Activated CD4-positive, alpha-beta T cell treated with anti-CD3 and anti-CD28 coated beads for 36 hours (primary cell): ENCODE measurements at regions of chr14 and their contacts with region 1.

Region 1: GRCh38 chr14:22556990-22557623 is 31.9 kb downstream of the DAD1 start:
- DNase-seq: peak; percentile 96
- ATAC-seq: peak; percentile 10
- H3K4me3 Mint-ChIP-seq: peak overlapping the region; percentile 76
- H3K27ac Mint-ChIP-seq: peak overlapping the region; percentile 100
- H3K4me1 Mint-ChIP-seq: peaks cover 86% of the 10 kb centered on the region
- H3K27me3 Mint-ChIP-seq: no peaks in the 10 kb centered on the region

Region 2: GRCh38 chr14:21748869-21749303 is 808.2 kb before region 1 on chr14:
- CTCF ChIA-PET with region 1: interaction called, 6 read pairs
- POLR2A ChIA-PET with region 1: no interaction called
- intact Hi-C with region 1: loop called in 1 of 2 experiments (anchors 2 kb)
- DNase-seq: peak; percentile 75
- ATAC-seq: peak; percentile 91
- H3K4me3 Mint-ChIP-seq: peak overlapping the region; percentile 52
- H3K27ac Mint-ChIP-seq: peak overlapping the region; percentile 71
- H3K4me1 Mint-ChIP-seq: peaks cover 9% of the 10 kb centered on the region
- H3K27me3 Mint-ChIP-seq: no peaks in the 10 kb centered on the region

Region 3: GRCh38 chr14:21987937-21988336 is 569.2 kb before region 1 on chr14:
- CTCF ChIA-PET with region 1: interaction called, 5 read pairs
- POLR2A ChIA-PET with region 1: interaction called, 4 read pairs
- intact Hi-C with region 1: loop called (anchors 1 to 10 kb)
- DNase-seq: peak; percentile 25
- ATAC-seq: peak; percentile 72
- H3K4me3 Mint-ChIP-seq: peak overlapping the region; percentile 57
- H3K27ac Mint-ChIP-seq: peak overlapping the region; percentile 86
- H3K4me1 Mint-ChIP-seq: peaks cover 28% of the 10 kb centered on the region
- H3K27me3 Mint-ChIP-seq: peaks cover 2% of the 10 kb centered on the region

Region 4: GRCh38 chr14:22314181-22314820 is 242.8 kb before region 1 on chr14:
- CTCF ChIA-PET with region 1: no interaction called
- POLR2A ChIA-PET with region 1: no interaction called
- intact Hi-C with region 1: loop called (anchors 5 to 10 kb)
- DNase-seq: no peak
- ATAC-seq: peak; percentile 61
- H3K4me3 Mint-ChIP-seq: peak overlapping the region; percentile 45
- H3K27ac Mint-ChIP-seq: peak overlapping the region; percentile 75
- H3K4me1 Mint-ChIP-seq: no peaks in the 10 kb centered on the region
- H3K27me3 Mint-ChIP-seq: no peaks in the 10 kb centered on the region

Region 5: DNA sequence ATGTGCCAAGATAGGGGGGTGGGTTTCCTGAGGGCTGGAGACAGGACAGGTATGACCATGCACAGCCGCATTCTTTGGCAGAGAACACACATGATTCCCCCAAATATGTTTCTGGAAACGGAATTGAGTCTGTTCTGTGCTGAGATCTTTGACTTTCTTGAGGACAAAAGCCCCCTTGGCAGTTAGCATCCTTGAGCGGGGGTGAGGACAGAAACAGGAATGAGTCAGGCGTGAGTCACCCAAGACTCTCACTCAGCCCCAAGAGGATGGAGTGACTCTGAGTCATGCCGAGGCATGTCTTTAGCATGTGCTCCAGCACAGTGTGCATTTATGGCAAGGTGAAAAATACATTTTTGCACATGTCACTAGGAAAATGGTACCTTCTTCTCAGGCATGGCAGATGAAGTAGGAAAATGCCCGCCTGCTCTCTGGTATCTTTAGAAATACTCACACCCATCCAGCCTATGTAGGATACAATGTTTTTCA is 20.2 kb before region 1 on chr14:
- CTCF ChIA-PET with region 1: interaction called, 39 read pairs
- POLR2A ChIA-PET with region 1: interaction called, 29 read pairs
- intact Hi-C with region 1: loop called in 1 of 2 experiments (anchors 1 kb)
- DNase-seq: peak; percentile 94
- ATAC-seq: peak; percentile 84
- H3K4me3 Mint-ChIP-seq: peak overlapping the region; percentile 84
- H3K27ac Mint-ChIP-seq: peak overlapping the region; percentile 99
- H3K4me1 Mint-ChIP-seq: peaks cover 95% of the 10 kb centered on the region
- H3K27me3 Mint-ChIP-seq: no peaks in the 10 kb centered on the region

Region 6: GRCh38 chr14:22622255-22622654 is 65.1 kb after region 1 on chr14:
- CTCF ChIA-PET with region 1: no interaction called
- POLR2A ChIA-PET with region 1: no interaction called
- intact Hi-C with region 1: no loop called
- DNase-seq: no peak
- ATAC-seq: no peak
- H3K4me3 Mint-ChIP-seq: no peak overlapping the region
- H3K27ac Mint-ChIP-seq: no peak overlapping the region
- H3K4me1 Mint-ChIP-seq: no peaks in the 10 kb centered on the region
- H3K27me3 Mint-ChIP-seq: peaks cover 2% of the 10 kb centered on the region

Region 7: DNA sequence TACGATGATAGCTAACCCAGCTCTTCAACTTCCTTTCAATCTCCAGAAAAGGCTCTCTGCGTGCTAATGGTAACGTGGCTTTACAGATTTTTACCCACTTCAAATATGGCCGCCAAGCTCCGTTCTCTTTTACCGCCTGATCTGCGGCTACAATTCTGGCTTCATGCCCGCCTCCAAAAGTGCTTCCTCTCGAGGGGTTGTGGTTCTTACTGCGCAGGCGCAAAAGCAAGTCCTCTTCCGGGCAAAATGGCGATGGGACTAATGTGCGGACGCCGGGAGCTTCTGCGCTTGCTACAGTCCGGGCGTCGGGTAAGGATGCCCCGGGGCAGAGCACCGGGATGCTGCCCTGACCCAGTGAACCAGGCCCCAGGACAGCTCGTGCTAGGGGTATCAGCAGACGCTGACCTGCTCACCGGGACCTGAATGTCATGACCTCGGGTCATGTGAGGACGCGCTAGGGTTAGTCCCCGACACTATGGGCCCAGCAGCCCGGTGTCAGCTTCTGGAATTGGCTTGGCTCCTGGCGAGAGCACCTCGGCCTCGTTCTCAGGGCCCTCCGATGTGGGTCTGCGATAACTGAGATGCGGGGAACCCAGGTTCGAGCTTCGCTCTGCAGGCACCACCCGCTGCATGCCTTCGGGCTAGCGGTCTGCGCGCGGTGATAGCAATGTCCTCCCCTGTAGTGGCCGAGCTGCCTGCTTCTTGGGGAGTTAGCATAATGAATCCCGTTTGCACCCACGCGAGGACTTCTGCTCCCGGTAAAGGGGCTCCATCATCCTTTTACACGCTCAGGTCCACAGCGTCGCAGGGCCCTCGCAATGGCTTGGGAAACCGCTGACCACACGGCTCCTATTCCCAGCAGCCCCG is 209.6 kb after region 1 on chr14 and contains the start of gene OXA1L:
- CTCF ChIA-PET with region 1: interaction called, 7 read pairs
- POLR2A ChIA-PET with region 1: interaction called, 11 read pairs
- intact Hi-C with region 1: loop called in 1 of 2 experiments (anchors 1 kb)
- DNase-seq: peak; percentile 98
- ATAC-seq: peak; percentile 87
- H3K4me3 Mint-ChIP-seq: peak within 1 kb of the TSS; percentile 90
- H3K27ac Mint-ChIP-seq: peak within 1 kb of the TSS; percentile 99
- H3K4me1 Mint-ChIP-seq: peaks cover 32% of the 10 kb centered on the region
- H3K27me3 Mint-ChIP-seq: no peaks in the 10 kb centered on the region
- total RNA-seq, gene OXA1L: 136 to 148 TPM

Region 8: DNA sequence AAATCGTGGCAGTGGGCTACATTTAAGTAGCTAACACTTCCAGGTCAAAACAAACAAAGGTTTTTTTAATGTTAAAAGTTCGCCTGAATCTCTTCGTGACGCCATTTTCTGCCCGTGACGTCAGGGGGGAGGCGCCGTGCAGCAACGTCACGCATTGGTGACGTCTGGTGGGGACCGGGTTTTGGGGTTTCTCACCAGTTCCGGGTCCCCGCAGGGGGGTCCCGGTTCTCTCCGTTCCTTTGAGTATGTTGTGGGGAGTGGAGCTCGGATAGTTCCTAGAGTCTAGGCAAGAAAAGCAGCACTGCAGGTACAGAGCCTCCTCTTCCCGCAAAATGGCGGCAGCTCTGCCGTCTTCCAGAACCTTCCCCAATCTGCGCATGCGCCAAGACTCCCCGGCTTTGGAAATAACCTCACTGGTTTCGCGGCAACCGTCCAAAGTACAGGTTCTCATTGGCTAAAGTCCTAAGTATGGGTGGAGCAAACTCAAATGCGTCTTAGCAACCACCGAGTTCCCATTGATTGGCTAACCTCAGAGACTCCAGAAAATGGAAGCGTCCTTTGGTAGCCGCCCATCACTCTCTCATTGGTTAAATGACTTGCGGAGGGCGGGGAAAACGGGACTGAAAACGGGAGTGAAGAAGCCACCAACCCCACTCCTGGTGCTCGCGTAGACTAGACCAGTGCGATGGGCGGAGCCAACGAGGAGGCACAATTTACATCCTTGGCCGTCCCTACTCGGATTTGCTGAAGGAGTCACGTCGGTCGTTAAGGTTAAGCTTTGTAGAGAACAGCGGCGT is 361.9 kb after region 1 on chr14 and contains the start of gene RBM23:
- CTCF ChIA-PET with region 1: no interaction called
- POLR2A ChIA-PET with region 1: no interaction called
- intact Hi-C with region 1: loop called in 1 of 2 experiments (anchors 1 kb)
- DNase-seq: peak; percentile 100
- ATAC-seq: peak; percentile 97
- H3K4me3 Mint-ChIP-seq: peak within 1 kb of the TSS; percentile 92
- H3K27ac Mint-ChIP-seq: peak within 1 kb of the TSS; percentile 99
- H3K4me1 Mint-ChIP-seq: peaks cover 40% of the 10 kb centered on the region
- H3K27me3 Mint-ChIP-seq: no peaks in the 10 kb centered on the region
- total RNA-seq, gene RBM23: 61.6 to 68.6 TPM